Kidney (tissue), 22 donors: ENCODE measurements at regions of chr3 and their contacts with region 1.

Region 1: DNA sequence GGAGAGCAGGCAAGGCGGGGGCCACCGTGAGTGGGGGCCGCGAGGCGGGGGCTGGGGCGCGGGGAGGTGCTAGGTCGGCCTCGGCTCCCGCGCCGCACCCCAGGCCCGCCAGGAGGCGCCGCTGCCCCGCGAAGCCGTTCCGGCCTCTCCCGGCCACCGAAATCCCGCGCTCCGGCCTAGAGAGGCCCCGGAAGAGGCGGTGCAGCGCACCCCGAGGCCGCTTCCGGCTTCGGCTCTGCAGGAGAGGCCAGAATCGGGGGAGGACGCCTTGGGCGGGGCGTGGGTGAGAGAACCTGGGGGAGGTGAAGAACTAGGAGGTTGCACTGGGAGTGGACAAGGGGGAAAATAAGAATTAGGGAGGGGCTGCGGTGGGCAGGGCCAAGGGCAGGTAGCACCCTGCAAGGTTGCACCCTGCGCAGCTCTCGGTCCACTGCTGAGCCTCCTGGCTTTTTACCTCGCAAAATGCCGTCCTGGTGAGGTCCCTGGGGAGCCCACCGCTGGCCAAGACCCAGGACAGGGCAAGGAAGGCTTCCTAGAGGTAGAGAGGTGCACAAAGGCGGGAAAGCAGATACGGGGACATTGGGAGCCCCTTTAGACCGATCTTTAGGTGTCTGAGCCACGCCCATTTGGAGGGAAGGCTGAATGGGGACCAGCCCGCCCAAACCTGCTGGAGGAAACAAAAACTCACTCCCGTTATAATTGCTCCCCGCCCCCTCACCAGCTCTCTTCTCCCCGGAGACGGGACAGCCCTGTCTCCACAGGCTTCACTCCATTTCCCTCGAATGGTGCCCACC is 8.4 kb upstream of the GNAI2 start:
- DNase-seq: peak; percentile 97 to 98 (median 98)
- H3K4me3 ChIP-seq: peak overlapping the region; percentile 63 to 90 (median 63)
- H3K27ac ChIP-seq: peak overlapping the region; percentile 58 to 89
- H3K4me1 ChIP-seq: peaks cover 0 to 18% (median 0%) of the 10 kb centered on the region in 3 donors
- H3K27me3 ChIP-seq: no peaks in the 10 kb centered on the region
- CTCF ChIP-seq: peak; percentile 88

Region 2: GRCh38 chr3:48926425-48927392 is 1300.9 kb before region 1 on chr3:
- intact Hi-C with region 1: no loop called
- DNase-seq: no peak
- H3K4me3 ChIP-seq: no peak overlapping the region
- H3K27ac ChIP-seq: no peak overlapping the region
- H3K4me1 ChIP-seq: peaks cover 0 to 16% (median 15%) of the 10 kb centered on the region in 3 donors
- H3K27me3 ChIP-seq: no peaks in the 10 kb centered on the region
- CTCF ChIP-seq: no peak

Region 3: DNA sequence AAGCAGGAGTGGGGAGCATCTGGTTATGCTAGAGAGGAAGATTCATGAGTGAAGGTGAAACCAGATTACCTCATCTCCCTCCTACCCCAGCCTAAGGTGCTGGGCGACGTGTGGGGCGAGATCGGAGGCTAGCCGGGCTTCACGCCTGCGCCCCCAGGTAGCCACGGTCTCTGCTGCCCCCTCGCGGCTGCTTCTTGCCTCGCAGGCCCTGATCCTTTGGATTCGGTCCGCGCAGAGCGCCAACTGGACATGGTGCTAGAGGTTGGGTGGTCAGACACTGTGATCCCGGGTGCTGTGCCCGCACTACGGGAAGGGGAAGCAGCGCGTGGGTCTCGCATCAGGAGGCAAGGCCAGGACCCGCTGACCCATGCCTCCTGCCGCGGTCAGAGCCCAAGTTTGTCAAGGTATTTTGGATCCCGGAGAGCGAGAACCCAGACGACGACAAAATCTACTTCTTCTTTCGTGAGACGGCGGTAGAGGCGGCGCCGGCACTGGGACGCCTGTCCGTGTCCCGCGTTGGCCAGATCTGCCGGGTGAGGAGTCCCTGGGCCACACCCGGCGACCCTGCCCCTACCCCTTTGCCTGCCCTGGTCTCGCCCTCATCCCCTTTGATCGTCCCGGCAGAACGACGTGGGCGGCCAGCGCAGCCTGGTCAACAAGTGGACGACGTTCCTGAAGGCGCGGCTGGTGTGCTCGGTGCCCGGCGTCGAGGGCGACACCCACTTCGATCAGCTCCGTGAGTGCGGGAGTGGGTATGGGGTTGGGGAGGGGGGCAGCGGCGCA is 45.5 kb after region 1 on chr3:
- intact Hi-C with region 1: loop called (anchors 5 kb)
- DNase-seq: peak; percentile 91 to 94 (median 94)
- H3K4me3 ChIP-seq: peak overlapping the region in 1 of 3 donors; percentile 35
- H3K27ac ChIP-seq: no peak overlapping the region
- H3K4me1 ChIP-seq: peaks cover 0 to 35% (median 17%) of the 10 kb centered on the region in 3 donors
- H3K27me3 ChIP-seq: peaks cover 8% of the 10 kb centered on the region
- CTCF ChIP-seq: peak; percentile 99

Region 4: DNA sequence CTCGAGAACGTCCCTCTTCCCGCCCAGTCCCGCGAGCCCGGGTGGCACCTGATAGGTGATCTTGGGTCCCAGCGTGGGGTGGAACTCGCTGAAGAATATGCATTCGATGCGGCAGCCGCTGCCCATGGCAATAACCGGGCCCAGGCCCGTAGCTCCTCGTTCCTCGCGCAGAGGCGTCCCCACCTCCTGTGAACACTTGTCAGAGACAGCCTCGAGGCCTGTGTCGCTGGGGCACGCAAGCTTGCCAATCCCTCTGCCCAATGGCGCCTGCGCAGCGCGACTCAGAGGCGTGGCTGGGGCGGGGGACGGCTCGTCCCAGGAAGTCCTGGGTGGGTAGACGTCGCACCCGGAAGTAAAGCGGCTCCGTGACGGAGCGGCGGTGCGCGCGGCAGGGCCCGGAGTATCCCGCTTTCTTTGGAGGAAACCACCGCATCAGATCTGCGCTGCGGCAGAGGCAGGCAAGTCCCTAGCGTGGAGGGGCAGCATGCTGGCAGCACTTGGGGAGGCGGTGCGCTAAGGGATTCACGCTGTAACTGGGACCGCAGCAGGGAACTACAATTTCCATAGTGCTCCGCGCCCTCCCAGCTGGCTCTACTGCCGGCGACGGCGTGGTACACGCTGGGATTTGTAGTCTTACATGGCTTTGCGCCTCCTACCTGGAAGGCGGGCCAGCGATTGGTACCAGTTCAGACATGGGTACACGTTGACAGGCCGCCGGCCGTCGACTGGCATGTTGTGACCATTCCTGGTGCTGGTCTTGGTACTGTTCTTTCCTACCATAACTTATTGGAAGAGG is 123.1 kb after region 1 on chr3 and contains the starts of genes CYB561D2 and NPRL2:
- intact Hi-C with region 1: no loop called
- DNase-seq: peak; percentile 96 to 99 (median 97)
- H3K4me3 ChIP-seq: peak within 1 kb of the TSS; percentile 81 to 97 (median 86)
- H3K27ac ChIP-seq: peak within 1 kb of the TSS; percentile 96 to 98
- H3K4me1 ChIP-seq: peaks cover 0 to 36% (median 21%) of the 10 kb centered on the region in 3 donors
- H3K27me3 ChIP-seq: no peaks in the 10 kb centered on the region
- CTCF ChIP-seq: no peak
- total RNA-seq, gene CYB561D2: 28.5 TPM
- total RNA-seq, gene NPRL2: 23.5 TPM